T-cell (primary cell): ENCODE measurements at regions of chr2 and their contacts with region 1.

Region 1: DNA sequence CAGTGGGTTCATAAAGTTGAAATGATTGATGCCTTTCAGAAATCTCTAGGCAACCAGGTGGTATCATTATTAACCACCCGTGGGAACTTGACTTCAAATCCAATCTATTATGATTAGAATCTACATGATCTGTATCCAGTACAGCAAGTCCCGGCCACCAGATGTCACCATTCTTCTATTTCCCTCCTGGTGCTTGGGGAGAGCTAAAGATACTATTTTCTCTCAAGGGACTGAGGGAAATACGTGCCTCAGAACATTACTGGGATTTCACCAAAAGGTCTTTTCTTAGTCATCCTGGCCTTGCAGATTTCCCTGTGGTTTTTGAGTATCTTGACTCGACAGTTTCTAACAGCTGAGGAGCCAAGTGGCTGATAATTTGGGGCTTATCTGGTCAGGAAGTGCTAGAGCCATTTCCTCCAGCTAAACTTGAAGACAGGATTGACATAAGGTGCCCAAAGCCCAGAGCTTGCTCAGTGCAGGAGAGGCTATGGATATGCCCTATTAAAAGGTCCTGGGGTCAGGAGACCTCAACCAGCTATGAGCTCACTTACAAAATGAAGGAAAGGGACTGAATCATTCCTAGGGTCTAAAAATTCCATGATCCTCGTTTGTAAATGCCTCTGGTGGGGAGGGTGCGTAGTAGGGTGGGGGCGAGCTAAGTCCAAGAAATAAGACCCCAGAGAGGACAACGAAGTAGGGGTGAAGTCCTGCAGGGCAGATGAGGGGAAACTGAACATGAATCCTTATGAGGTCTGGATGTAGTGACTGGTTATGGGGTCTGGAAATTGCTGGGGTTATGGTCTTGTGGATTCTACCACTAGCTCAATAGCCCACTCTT is 135.4 kb upstream of the MGAT5 start:
- DNase-seq: peak; percentile 57 to 89 (median 81)
- ATAC-seq: peak; percentile 17 to 43 (median 23)
- H3K4me3 ChIP-seq: no peak overlapping the region
- H3K4me3 Mint-ChIP-seq: peak overlapping the region; percentile 89 to 99 (median 98)
- H3K27ac ChIP-seq: no peak overlapping the region
- H3K27ac Mint-ChIP-seq: peak overlapping the region in 1 of 2 donors; percentile 98
- H3K4me1 ChIP-seq: peaks cover 28 to 40% of the 10 kb centered on the region in 2 experiments
- H3K4me1 Mint-ChIP-seq: peaks cover 34 to 39% (median 38%) of the 10 kb centered on the region in 3 donors
- H3K27me3 ChIP-seq: no peaks in the 10 kb centered on the region
- H3K27me3 Mint-ChIP-seq: peaks cover 0 to 3% of the 10 kb centered on the region in 2 donors

Region 2: DNA sequence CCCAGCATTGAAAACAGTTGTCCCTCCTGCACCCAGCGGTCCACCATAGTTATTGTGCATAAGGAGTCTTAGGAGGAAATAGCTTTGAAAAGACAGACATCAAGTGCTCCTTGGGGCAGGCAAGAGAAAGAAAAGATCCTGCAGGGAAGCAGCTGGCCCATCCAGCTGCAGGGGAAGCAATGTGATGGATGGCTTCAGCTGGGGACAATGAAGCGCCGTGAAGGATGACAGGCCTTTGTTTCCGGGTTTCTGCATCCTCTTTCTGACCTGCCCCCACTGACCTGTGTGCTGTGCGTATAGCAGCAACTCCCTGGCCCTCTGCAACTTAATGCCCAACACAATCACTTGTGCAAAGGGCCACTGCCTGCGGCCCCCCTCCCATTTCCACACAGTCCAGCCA is 407.3 kb before region 1 on chr2:
- CTCF ChIA-PET with region 1: no interaction called
- POLR2A ChIA-PET with region 1: no interaction called
- DNase-seq: no peak
- ATAC-seq: no peak
- H3K4me3 ChIP-seq: no peak overlapping the region
- H3K4me3 Mint-ChIP-seq: no peak overlapping the region
- H3K27ac ChIP-seq: no peak overlapping the region
- H3K27ac Mint-ChIP-seq: no peak overlapping the region
- H3K4me1 ChIP-seq: no peaks in the 10 kb centered on the region
- H3K4me1 Mint-ChIP-seq: no peaks in the 10 kb centered on the region
- H3K27me3 ChIP-seq: no peaks in the 10 kb centered on the region
- H3K27me3 Mint-ChIP-seq: peaks cover 4 to 6% of the 10 kb centered on the region in 2 donors

Region 3: GRCh38 chr2:134198006-134198634 is 79.6 kb after region 1 on chr2:
- CTCF ChIA-PET with region 1: interaction called, 4 to 18 read pairs
- POLR2A ChIA-PET with region 1: no interaction called
- DNase-seq: peak in 1 of 35 experiments; percentile 22
- ATAC-seq: peak; percentile 31 to 57 (median 52)
- H3K4me3 ChIP-seq: no peak overlapping the region
- H3K4me3 Mint-ChIP-seq: peak overlapping the region; percentile 52 to 57 (median 57)
- H3K27ac ChIP-seq: no peak overlapping the region
- H3K27ac Mint-ChIP-seq: peak overlapping the region; percentile 72 to 85
- H3K4me1 ChIP-seq: peaks cover 20 to 28% of the 10 kb centered on the region in 2 experiments
- H3K4me1 Mint-ChIP-seq: peaks cover 83 to 88% (median 84%) of the 10 kb centered on the region in 3 donors
- H3K27me3 ChIP-seq: no peaks in the 10 kb centered on the region
- H3K27me3 Mint-ChIP-seq: no peaks in the 10 kb centered on the region

Region 4: DNA sequence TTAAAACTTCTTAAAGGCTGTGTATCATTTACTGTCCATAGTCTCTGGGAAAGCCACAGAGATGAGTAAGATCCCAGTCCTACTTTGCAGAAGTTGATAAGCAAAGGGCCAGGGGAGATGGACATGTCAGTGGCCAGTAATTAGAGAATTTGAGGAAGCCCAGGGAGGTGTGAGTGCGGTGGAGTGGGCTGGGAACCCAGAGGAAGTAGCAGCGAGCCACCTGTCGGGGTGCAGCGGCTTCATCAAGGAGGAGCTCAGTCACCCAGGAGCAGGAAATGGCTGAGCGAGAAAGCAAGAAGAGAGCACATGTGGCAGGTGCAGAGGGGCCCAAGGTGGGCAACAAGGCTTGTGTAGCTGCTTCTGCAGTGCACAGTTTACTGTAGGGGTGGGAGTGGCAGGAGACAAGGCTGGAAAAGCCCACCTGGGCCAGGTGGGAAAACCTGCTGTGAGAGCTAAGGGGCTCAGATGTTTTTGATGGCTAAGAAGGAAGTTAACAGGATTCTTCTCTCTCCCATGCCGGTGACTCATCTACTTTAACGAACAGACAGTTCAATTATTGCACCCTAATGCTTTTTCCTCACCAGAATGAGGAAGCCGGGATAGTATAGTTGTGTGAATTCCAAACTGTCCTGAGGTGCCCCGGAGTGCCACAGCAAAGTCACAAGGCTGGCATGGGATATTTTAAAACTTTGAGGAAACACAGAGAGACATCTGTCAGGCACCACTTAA is 100.6 kb after region 1 on chr2:
- CTCF ChIA-PET with region 1: interaction called, 7 to 27 read pairs
- POLR2A ChIA-PET with region 1: interaction called in 1 of 2 experiments, 3 read pairs
- DNase-seq: peak in 34 of 35 experiments; percentile 21 to 63 (median 38)
- ATAC-seq: peak; percentile 70 to 84 (median 78)
- H3K4me3 ChIP-seq: peak overlapping the region; percentile 5 to 15
- H3K4me3 Mint-ChIP-seq: peak overlapping the region; percentile 48 to 75 (median 61)
- H3K27ac ChIP-seq: peak overlapping the region; percentile 84
- H3K27ac Mint-ChIP-seq: peak overlapping the region; percentile 88 to 94
- H3K4me1 ChIP-seq: peaks cover 44 to 48% of the 10 kb centered on the region in 2 experiments
- H3K4me1 Mint-ChIP-seq: peaks cover 59 to 77% (median 66%) of the 10 kb centered on the region in 3 donors
- H3K27me3 ChIP-seq: no peaks in the 10 kb centered on the region
- H3K27me3 Mint-ChIP-seq: no peaks in the 10 kb centered on the region

Region 5: DNA sequence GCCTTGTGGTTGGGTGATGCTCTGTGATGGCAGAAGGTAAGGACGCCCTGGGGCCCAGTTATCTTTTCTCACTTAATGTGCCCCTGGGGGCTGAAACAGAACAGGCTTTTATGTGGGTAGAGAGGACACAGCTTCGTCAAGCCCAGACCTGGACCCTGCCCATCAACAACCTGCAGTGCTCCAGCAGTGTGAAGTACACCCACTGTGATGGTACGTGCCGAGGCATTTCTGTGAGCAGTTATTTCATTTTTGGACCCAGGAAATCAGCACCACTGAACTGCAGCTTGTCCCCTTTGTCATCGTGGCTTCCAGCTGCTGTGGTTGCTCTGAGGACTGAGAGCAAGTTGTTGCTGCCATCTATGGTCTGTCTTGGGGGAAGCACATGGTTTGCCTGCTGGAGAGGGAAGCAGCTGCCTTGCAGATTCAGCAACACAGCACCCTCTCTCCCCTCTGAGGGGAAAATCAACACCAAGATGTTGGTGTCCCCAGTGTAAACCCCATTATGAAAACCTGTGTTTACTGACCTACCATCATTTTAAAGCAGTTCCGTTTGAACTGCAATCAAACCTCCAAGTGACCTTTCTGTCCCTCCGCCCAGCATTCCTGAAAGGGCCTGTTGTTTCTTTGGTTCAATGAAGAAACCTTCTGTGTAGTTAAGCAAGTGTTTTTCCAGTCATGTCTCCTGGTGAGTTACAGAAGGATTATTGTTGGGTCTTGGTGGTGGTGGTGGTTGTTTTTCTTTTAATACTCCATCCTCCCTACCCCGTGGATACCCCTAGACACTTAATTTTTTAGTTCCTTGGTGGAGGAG is 293.5 kb after region 1 on chr2:
- CTCF ChIA-PET with region 1: interaction called, 66 to 115 read pairs
- POLR2A ChIA-PET with region 1: interaction called in 1 of 2 experiments, 3 read pairs
- DNase-seq: peak; percentile 34 to 81 (median 61)
- ATAC-seq: peak; percentile 88 to 97 (median 92)
- H3K4me3 ChIP-seq: no peak overlapping the region
- H3K4me3 Mint-ChIP-seq: no peak overlapping the region
- H3K27ac ChIP-seq: no peak overlapping the region
- H3K27ac Mint-ChIP-seq: peak overlapping the region; percentile 46 to 74
- H3K4me1 ChIP-seq: peaks cover 19 to 27% of the 10 kb centered on the region in 2 experiments
- H3K4me1 Mint-ChIP-seq: peaks cover 49 to 54% (median 52%) of the 10 kb centered on the region in 3 donors
- H3K27me3 ChIP-seq: no peaks in the 10 kb centered on the region
- H3K27me3 Mint-ChIP-seq: no peaks in the 10 kb centered on the region

Region 6: DNA sequence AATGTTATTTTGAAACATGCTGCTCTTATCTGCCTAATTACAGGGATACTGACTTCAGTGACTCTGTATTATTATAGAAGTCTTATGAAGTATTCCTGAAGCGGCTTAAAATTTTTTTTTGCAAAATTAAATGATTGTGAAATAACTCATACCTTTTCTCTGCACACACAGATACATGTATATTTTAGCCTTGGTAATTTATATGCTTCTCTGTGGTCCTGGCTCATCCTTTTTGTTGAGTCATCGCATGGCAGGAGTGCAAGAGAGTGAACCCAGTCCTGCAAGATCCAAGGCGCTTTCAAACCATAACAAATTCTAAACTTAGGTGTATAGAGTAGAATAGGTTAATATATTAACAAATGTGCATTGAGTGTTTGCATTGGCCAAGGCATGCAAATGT is 808.7 kb after region 1 on chr2:
- CTCF ChIA-PET with region 1: no interaction called
- POLR2A ChIA-PET with region 1: interaction called in 1 of 2 experiments, 13 read pairs
- DNase-seq: no peak
- ATAC-seq: no peak
- H3K4me3 ChIP-seq: no peak overlapping the region
- H3K4me3 Mint-ChIP-seq: peak overlapping the region in 1 of 3 donors; percentile 60
- H3K27ac ChIP-seq: no peak overlapping the region
- H3K27ac Mint-ChIP-seq: no peak overlapping the region
- H3K4me1 ChIP-seq: peaks cover 20 to 27% of the 10 kb centered on the region in 2 experiments
- H3K4me1 Mint-ChIP-seq: peaks cover 73 to 87% (median 85%) of the 10 kb centered on the region in 3 donors
- H3K27me3 ChIP-seq: no peaks in the 10 kb centered on the region
- H3K27me3 Mint-ChIP-seq: no peaks in the 10 kb centered on the region